ENCODE measurements at regions of chr1 and their contacts with region 1.

Region 1: GRCh38 chr1:225772323-225772768 is 5.3 kb upstream of the SRP9 start:
- DNase-seq: peak; percentile 91 to 94
- H3K4me3 ChIP-seq: no peak overlapping the region
- H3K27ac ChIP-seq: peak overlapping the region; percentile 45
- H3K4me1 ChIP-seq: peaks cover 51% of the 10 kb centered on the region
- H3K27me3 ChIP-seq: no peaks in the 10 kb centered on the region
- CTCF ChIP-seq: peak; percentile 90

Region 2: DNA sequence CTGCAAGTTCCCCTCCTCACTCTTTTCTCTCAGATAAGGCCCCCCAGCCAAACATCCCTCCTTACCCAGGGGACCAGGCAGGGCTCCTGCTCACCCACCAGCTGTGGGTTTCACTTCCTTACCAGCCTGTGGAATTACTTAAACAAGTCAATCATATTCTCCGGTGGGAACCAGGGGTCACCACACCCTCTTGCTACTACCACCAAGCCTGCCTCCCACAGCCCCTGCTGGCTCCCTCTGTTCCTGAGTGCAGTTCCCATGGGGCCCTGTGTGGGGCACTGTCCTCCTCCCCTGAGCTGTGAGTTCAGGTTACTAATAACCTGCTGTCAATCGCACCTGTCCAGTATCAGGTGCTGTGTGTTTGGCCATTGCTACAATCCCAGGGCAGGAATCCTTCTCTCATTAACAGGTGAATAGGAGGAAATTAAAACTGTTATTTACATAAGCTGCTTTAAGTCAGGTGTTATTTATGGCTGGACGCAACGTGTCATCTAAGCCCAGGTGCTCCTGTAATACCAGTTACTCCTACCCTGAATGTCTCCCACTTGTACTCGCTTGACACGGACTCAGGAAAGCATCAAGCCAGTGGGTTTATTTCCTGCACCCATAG is 291.4 kb before region 1 on chr1:
- CTCF ChIA-PET with region 1: interaction called, 12 read pairs
- POLR2A ChIA-PET with region 1: interaction called, 6 read pairs
- intact Hi-C with region 1: loop called (anchors 1 kb)
- DNase-seq: peak; percentile 59 to 81
- H3K4me3 ChIP-seq: no peak overlapping the region
- H3K27ac ChIP-seq: no peak overlapping the region
- H3K4me1 ChIP-seq: no peaks in the 10 kb centered on the region
- H3K27me3 ChIP-seq: no peaks in the 10 kb centered on the region
- CTCF ChIP-seq: peak; percentile 94

Region 3: DNA sequence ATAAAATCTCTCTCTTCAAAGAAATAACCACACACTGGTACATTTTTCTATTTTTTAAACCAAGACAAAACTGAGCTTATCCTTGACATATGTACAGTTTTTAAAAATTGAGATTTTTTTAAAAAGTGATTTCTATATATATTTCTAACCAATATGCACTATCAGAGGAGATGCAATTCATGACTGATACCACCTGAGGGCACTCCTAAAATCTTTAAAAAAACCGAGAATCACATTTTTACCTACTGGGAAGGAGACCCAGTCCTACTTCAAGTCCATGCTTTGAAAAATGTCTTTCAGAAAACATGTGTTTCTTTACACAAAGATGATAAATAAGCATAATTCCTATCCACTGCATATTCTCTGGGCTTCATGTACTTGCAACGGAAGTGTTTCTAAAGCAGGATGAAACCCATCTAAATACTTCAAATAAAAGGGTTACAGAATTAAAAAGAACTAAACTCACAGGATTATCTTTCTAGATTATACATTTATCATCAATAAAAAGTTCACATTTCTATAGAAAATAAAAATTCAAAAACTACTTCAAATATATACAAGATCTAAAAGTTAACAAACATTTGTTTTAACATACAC is 218.0 kb before region 1 on chr1:
- CTCF ChIA-PET with region 1: interaction called, 3 read pairs
- POLR2A ChIA-PET with region 1: no interaction called
- intact Hi-C with region 1: loop called (anchors 1 kb)
- DNase-seq: no peak
- H3K4me3 ChIP-seq: no peak overlapping the region
- H3K27ac ChIP-seq: 0 out of 2 replicates have a peak overlapping the region, but pooled peaks have one; percentile 25
- H3K4me1 ChIP-seq: no peaks in the 10 kb centered on the region
- H3K27me3 ChIP-seq: no peaks in the 10 kb centered on the region
- CTCF ChIP-seq: peak; percentile 78

Region 4: DNA sequence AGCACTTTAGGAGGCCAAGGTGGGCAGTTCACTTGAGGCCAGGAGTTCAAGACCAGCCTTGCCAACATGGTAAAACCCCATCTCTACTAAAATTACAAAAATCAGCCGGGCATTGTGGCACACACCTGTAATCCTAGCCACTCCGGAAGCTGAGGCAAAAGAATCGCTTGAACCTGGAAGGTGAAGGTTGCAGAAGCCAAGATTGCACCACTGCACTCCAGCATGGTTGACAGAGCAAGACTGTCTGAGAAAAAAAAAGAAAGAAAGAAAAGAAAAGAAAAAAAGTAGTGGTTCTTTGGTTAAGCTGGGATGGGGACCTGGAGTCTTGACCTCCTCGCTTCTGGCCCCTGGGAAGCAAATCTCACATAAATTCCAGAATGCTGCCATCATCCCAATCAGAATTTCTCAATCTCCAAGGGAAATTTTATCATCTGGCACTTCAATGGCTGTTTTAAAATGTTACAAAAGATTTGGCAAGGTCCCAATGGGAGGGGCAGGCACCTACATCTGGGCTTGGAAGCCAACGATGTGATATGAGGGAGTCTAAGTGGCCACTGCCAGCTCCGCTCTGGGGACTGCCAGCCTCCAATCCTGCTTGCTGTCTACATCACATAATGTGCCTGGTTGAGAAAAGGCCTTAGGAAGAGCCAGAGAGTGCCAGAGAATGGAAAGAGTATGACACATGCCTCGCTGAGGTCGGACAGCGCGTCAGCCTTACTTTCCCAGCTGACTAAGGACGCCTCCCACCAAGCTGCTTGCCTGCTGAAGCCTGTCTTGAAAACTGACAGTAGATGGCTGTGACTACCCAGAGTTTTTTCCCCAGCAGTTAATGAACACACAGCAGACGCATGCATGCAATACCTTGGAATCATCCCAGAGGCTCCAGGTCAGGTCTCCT is 36.8 kb before region 1 on chr1:
- CTCF ChIA-PET with region 1: interaction called, 4 read pairs
- POLR2A ChIA-PET with region 1: interaction called, 3 read pairs
- intact Hi-C with region 1: loop called (anchors 2 kb)
- DNase-seq: peak; percentile 79 to 90
- H3K4me3 ChIP-seq: peak overlapping the region; percentile 18; the same call in 1 of the 2 replicates
- H3K27ac ChIP-seq: peak overlapping the region; percentile 86
- H3K4me1 ChIP-seq: peaks cover 63% of the 10 kb centered on the region
- H3K27me3 ChIP-seq: no peaks in the 10 kb centered on the region
- CTCF ChIP-seq: no peak

Region 5: DNA sequence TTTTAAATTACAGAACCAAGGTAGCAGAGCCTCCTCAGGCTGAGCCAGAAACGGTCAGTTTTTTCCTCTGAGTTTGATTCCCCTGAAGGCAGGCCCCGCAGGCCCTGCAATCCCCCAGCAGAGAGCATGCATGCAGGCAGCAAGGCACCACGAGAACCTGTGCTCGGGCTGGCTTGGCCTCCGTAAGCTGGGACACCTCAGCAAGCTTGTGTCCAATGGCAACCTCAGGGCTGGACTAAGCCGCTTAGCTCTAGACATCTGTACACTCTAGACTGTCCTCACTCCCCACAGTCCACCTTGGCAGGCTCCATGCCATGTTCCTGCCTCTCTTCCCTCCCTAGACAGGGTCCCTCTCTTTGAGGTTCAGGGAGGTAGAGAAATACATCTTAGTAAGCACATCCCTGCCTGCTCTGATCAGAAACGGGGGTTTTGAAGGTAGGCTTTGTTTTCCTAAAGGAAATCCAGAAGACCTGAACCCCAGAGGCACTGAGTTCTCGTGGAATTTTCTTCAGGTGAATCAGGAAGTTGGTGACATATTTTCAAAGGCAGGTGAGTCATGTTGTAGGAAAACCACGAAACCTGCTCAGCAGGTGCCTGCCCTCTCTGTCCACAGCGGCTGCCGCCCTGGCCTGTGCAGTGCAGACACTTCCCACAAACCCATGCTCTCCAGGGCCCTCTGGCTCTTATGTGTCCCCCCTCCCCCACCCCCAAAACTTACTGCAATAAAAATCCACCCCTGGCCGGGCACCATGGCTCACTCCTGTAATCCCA is 102.9 kb after region 1 on chr1:
- CTCF ChIA-PET with region 1: no interaction called
- POLR2A ChIA-PET with region 1: no interaction called
- intact Hi-C with region 1: no loop called
- DNase-seq: peak; percentile 92 to 96
- H3K4me3 ChIP-seq: peak overlapping the region; percentile 30; the same call in 1 of the 2 replicates
- H3K27ac ChIP-seq: peak overlapping the region; percentile 91
- H3K4me1 ChIP-seq: peaks cover 91% of the 10 kb centered on the region
- H3K27me3 ChIP-seq: no peaks in the 10 kb centered on the region
- CTCF ChIP-seq: no peak

Region 6: GRCh38 chr1:226223786-226224244 is 451.5 kb after region 1 on chr1:
- CTCF ChIA-PET with region 1: no interaction called
- POLR2A ChIA-PET with region 1: no interaction called
- intact Hi-C with region 1: no loop called
- DNase-seq: no peak
- H3K4me3 ChIP-seq: no peak overlapping the region
- H3K27ac ChIP-seq: no peak overlapping the region
- H3K4me1 ChIP-seq: no peaks in the 10 kb centered on the region
- H3K27me3 ChIP-seq: no peaks in the 10 kb centered on the region
- CTCF ChIP-seq: no peak

Measured in PC-9 (cell line).